ENCODE measurements at regions of chr16 and their contacts with region 1.

Region 1: GRCh38 chr16:82263521-82264143 is 93.6 kb upstream of the MPHOSPH6 start:
- DNase-seq: peak; percentile 32 to 42 (median 38)
- H3K4me3 ChIP-seq: no peak overlapping the region
- H3K4me3 Mint-ChIP-seq: no peak overlapping the region
- H3K27ac ChIP-seq: no peak overlapping the region
- H3K27ac Mint-ChIP-seq: no peak overlapping the region
- H3K4me1 ChIP-seq: no peaks in the 10 kb centered on the region
- H3K4me1 Mint-ChIP-seq: peaks cover 0 to 4% (median 0%) of the 10 kb centered on the region in 4 donors
- H3K27me3 ChIP-seq: no peaks in the 10 kb centered on the region
- H3K27me3 Mint-ChIP-seq: peaks cover 4 to 11% of the 10 kb centered on the region in 2 donors

Region 2: DNA sequence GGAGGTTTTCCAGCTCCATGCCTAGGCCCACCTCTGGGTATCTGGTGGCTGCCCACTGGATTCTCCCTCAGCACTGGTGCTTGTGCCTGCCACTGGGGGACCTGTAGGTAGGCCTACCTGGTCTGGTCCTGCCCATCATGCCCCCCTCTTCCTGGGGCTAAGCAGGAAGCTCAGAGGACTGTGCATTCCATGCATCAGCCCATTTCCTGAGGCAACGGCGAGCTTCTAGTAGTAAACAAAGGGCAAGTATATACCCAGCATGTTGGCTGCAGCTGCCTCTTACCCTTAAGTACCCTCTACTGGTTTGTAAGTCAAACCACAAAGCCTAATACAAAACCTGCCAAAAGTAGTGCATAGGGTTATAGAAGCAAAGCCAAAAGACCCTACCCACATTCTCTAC is 289.9 kb before region 1 on chr16:
- CTCF ChIA-PET with region 1: no interaction called
- POLR2A ChIA-PET with region 1: no interaction called
- intact Hi-C with region 1: no loop called
- DNase-seq: no peak
- H3K4me3 ChIP-seq: no peak overlapping the region
- H3K4me3 Mint-ChIP-seq: no peak overlapping the region
- H3K27ac ChIP-seq: no peak overlapping the region
- H3K27ac Mint-ChIP-seq: no peak overlapping the region
- H3K4me1 ChIP-seq: no peaks in the 10 kb centered on the region
- H3K4me1 Mint-ChIP-seq: no peaks in the 10 kb centered on the region
- H3K27me3 ChIP-seq: no peaks in the 10 kb centered on the region
- H3K27me3 Mint-ChIP-seq: peaks cover 3 to 7% of the 10 kb centered on the region in 2 donors

Region 3: GRCh38 chr16:82043680-82044584 is 219.7 kb before region 1 on chr16:
- CTCF ChIA-PET with region 1: no interaction called
- POLR2A ChIA-PET with region 1: no interaction called
- intact Hi-C with region 1: no loop called
- DNase-seq: no peak
- H3K4me3 ChIP-seq: no peak overlapping the region
- H3K4me3 Mint-ChIP-seq: no peak overlapping the region
- H3K27ac ChIP-seq: no peak overlapping the region
- H3K27ac Mint-ChIP-seq: no peak overlapping the region
- H3K4me1 ChIP-seq: no peaks in the 10 kb centered on the region
- H3K4me1 Mint-ChIP-seq: no peaks in the 10 kb centered on the region
- H3K27me3 ChIP-seq: no peaks in the 10 kb centered on the region
- H3K27me3 Mint-ChIP-seq: peaks cover 5 to 14% of the 10 kb centered on the region in 2 donors

Region 4: DNA sequence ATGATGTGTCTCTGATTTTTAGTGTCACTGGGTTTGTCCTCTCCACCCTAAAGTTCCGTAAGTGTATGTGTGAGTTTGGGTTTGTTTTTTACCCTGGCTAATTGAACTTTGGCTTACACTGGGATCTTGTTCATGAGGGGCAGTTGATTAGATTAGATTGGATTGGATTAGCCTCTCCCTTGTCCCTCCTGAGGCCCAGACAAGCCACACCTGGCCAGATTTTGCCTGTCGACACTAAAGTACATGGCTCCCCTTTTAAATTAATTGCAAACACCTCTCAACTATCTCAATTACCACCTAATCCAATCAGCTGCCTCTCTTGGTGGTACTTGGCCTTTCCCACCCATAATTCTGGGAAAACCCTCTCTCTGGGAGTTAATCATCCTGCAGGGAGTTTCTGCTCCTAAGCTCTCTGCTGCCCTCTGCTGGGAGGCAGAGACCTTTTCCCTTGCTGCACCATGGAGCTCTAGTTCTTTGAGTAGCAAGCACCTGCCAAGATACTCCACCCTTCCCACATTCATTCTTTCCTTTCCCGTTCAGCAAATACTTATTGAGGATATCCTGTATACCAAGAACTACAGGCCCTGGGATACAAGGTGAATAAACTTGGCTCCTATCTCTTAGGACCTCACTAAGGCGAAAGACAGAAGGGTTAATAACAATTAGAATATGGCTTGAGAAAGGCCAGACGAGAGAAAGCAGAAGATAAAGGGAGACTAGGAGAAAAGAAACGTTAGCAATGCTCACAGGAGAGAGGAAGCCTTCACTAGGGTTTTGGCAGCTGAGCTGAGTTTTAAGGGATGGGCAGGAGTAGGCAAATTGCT is 33.6 kb before region 1 on chr16:
- CTCF ChIA-PET with region 1: interaction called, 17 read pairs
- POLR2A ChIA-PET with region 1: no interaction called
- intact Hi-C with region 1: no loop called
- DNase-seq: peak; percentile 33 to 53 (median 41)
- H3K4me3 ChIP-seq: no peak overlapping the region
- H3K4me3 Mint-ChIP-seq: no peak overlapping the region
- H3K27ac ChIP-seq: no peak overlapping the region
- H3K27ac Mint-ChIP-seq: no peak overlapping the region
- H3K4me1 ChIP-seq: no peaks in the 10 kb centered on the region
- H3K4me1 Mint-ChIP-seq: no peaks in the 10 kb centered on the region
- H3K27me3 ChIP-seq: no peaks in the 10 kb centered on the region
- H3K27me3 Mint-ChIP-seq: peaks cover 4 to 5% of the 10 kb centered on the region in 2 donors

Region 5: GRCh38 chr16:82281544-82281943 is 17.9 kb after region 1 on chr16:
- CTCF ChIA-PET with region 1: interaction called, 13 read pairs
- POLR2A ChIA-PET with region 1: no interaction called
- intact Hi-C with region 1: no loop called
- DNase-seq: no peak
- H3K4me3 ChIP-seq: no peak overlapping the region
- H3K4me3 Mint-ChIP-seq: no peak overlapping the region
- H3K27ac ChIP-seq: no peak overlapping the region
- H3K27ac Mint-ChIP-seq: no peak overlapping the region
- H3K4me1 ChIP-seq: no peaks in the 10 kb centered on the region
- H3K4me1 Mint-ChIP-seq: no peaks in the 10 kb centered on the region
- H3K27me3 ChIP-seq: no peaks in the 10 kb centered on the region
- H3K27me3 Mint-ChIP-seq: peaks cover 2 to 5% of the 10 kb centered on the region in 2 donors

Region 6: DNA sequence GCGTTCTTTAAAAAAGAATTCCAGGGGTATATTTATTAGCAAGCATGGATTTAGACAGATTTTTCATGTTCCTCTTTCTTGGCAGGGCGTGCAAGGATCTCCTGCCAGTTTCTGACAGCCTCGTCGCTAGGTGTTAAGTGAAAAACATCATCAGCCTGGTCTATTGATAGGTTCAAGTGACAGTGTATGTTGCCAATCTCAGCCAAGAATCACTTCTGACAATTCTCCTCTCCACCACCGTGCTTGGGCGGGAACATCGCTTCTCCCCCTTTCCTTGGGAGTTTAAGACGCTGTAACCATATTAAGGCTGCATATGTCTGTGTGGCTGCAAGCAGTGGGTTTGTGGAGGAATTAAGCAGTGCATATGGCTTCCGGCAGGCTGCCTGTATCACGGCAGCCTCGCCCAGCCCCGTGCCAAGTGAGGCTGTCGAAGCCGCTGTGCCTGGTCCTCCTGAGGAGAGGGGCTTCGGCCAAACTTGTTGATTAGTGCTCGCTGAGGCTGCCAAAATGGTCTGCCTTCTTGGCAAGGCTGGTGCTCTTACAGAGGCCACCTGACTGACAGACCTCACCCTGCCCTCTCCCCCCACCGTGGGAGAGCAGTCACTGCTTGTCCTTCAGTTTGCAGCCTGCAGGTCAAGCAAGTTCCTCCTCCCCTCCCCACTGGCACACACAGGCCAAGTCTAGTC is 38.6 kb after region 1 on chr16:
- CTCF ChIA-PET with region 1: no interaction called
- POLR2A ChIA-PET with region 1: no interaction called
- intact Hi-C with region 1: no loop called
- DNase-seq: no peak
- H3K4me3 ChIP-seq: no peak overlapping the region
- H3K4me3 Mint-ChIP-seq: no peak overlapping the region
- H3K27ac ChIP-seq: no peak overlapping the region
- H3K27ac Mint-ChIP-seq: no peak overlapping the region
- H3K4me1 ChIP-seq: no peaks in the 10 kb centered on the region
- H3K4me1 Mint-ChIP-seq: no peaks in the 10 kb centered on the region
- H3K27me3 ChIP-seq: no peaks in the 10 kb centered on the region
- H3K27me3 Mint-ChIP-seq: peaks cover 0 to 2% of the 10 kb centered on the region in 2 donors

Region 7: DNA sequence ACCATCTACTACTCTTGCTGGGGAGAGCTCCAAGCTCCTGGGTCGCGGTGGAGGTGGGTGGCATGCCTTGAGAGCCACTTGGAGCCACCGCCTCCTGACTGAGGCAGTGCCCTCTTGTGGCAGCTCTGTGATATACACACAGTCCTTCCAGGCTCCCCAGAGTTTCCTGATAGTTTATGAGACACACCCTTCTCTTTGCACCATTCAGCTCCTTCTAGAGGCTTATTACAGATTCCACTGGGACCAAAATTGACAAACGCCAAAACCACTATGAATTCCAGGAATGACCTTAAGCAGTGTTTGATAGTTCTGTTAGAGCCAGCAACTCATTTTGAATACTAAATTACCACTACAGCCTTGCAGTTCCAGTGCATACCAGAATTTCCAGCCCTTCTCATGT is 193.1 kb after region 1 on chr16:
- CTCF ChIA-PET with region 1: interaction called, 10 read pairs
- POLR2A ChIA-PET with region 1: no interaction called
- intact Hi-C with region 1: no loop called
- DNase-seq: peak in 1 of 5 donors; percentile 4
- H3K4me3 ChIP-seq: no peak overlapping the region
- H3K4me3 Mint-ChIP-seq: no peak overlapping the region
- H3K27ac ChIP-seq: no peak overlapping the region
- H3K27ac Mint-ChIP-seq: no peak overlapping the region
- H3K4me1 ChIP-seq: no peaks in the 10 kb centered on the region
- H3K4me1 Mint-ChIP-seq: peaks cover 0 to 4% (median 0%) of the 10 kb centered on the region in 4 donors
- H3K27me3 ChIP-seq: no peaks in the 10 kb centered on the region
- H3K27me3 Mint-ChIP-seq: peaks cover 3% of the 10 kb centered on the region in 2 donors

Region 8: DNA sequence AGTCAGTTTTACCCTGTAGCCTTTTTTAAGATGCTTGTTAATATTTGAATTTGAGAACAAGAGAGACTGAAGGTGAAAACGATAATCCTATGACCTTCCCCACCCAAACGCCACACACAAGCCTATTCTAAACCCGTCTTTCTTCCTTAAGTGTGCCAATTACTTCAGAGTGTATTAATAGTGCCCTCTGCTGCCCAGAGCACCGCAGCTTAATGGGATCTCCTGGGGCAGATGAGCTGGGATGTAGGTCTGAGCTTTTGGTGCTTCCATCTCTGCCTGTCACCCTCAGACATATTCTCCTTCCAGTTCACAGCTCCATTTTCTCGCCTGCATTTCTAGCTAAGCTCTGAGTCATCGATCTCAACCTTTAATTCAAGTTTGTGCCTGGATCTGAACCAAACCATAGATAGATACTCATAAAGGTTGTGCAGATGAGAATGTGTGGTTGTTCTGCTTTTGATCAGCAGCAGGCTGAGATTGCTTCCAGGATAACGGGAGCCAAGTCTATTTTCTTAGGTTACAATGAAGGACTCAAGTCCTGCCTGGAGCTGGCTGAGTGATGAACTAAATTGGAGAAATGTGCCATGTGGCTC is 316.8 kb after region 1 on chr16:
- CTCF ChIA-PET with region 1: no interaction called
- POLR2A ChIA-PET with region 1: no interaction called
- intact Hi-C with region 1: no loop called
- DNase-seq: no peak
- H3K4me3 ChIP-seq: no peak overlapping the region
- H3K4me3 Mint-ChIP-seq: no peak overlapping the region
- H3K27ac ChIP-seq: no peak overlapping the region
- H3K27ac Mint-ChIP-seq: no peak overlapping the region
- H3K4me1 ChIP-seq: no peaks in the 10 kb centered on the region
- H3K4me1 Mint-ChIP-seq: no peaks in the 10 kb centered on the region
- H3K27me3 ChIP-seq: no peaks in the 10 kb centered on the region
- H3K27me3 Mint-ChIP-seq: peaks cover 0 to 3% of the 10 kb centered on the region in 2 donors

Region 9: DNA sequence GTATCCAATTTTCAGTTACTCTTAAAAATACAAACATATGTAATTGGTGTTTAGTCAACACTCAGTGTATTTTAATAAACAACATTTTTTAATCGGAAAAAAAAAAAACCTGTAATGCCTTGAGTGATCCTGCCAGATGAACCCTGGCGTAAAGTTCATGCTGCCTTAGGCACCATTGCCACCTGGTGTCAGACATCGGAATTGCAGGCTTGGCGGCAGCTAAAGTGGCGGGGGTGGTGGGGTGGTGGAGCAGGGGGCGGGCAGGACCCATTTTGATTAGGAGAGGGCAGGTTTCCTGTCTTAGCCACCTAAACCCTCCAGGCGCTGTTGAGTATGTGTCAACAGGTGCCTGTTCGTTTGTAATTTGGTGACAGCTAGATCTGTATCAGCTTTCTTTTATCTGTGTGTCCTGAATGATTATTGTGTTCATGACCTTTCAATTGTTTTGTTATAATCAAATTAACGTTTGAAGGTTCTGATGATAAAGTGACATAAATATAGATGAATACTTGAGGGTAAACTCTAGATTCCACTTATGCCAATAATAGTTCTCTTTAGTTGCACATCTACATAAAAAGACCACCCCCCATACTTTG is 951.9 kb after region 1 on chr16:
- CTCF ChIA-PET with region 1: interaction called, 18 read pairs
- POLR2A ChIA-PET with region 1: no interaction called
- intact Hi-C with region 1: no loop called
- DNase-seq: peak in 4 of 5 donors; percentile 6 to 34 (median 13)
- H3K4me3 ChIP-seq: no peak overlapping the region
- H3K4me3 Mint-ChIP-seq: no peak overlapping the region
- H3K27ac ChIP-seq: no peak overlapping the region
- H3K27ac Mint-ChIP-seq: no peak overlapping the region
- H3K4me1 ChIP-seq: no peaks in the 10 kb centered on the region
- H3K4me1 Mint-ChIP-seq: no peaks in the 10 kb centered on the region
- H3K27me3 ChIP-seq: no peaks in the 10 kb centered on the region
- H3K27me3 Mint-ChIP-seq: no peaks in the 10 kb centered on the region